Tibial artery (tissue), 4 donors: ENCODE measurements at regions of chr1 and their contacts with region 1.

Region 1: GRCh38 chr1:243345205-243345604 is 89.4 kb downstream of the SDCCAG8 start:
- DNase-seq: no peak
- H3K4me3 ChIP-seq: no peak overlapping the region
- H3K27ac ChIP-seq: no peak overlapping the region
- H3K4me1 ChIP-seq: no peaks in the 10 kb centered on the region
- H3K27me3 ChIP-seq: no peaks in the 10 kb centered on the region
- CTCF ChIP-seq: no peak

Region 2: GRCh38 chr1:243930822-243931671 is 585.8 kb after region 1 on chr1:
- intact Hi-C with region 1: no loop called
- DNase-seq: no peak
- H3K4me3 ChIP-seq: no peak overlapping the region
- H3K27ac ChIP-seq: peak overlapping the region in 1 of 2 donors; percentile 48
- H3K4me1 ChIP-seq: peaks cover 0 to 30% (median 18%) of the 10 kb centered on the region in 4 donors
- H3K27me3 ChIP-seq: no peaks in the 10 kb centered on the region
- CTCF ChIP-seq: no peak

Region 3: GRCh38 chr1:244272471-244273261 is 927.5 kb after region 1 on chr1:
- intact Hi-C with region 1: loop called (anchors 5 kb)
- DNase-seq: peak; percentile 60 to 84
- H3K4me3 ChIP-seq: no peak overlapping the region
- H3K27ac ChIP-seq: peak overlapping the region; percentile 64 to 78
- H3K4me1 ChIP-seq: peaks cover 0 to 23% (median 11%) of the 10 kb centered on the region in 4 donors
- H3K27me3 ChIP-seq: no peaks in the 10 kb centered on the region
- CTCF ChIP-seq: peak; percentile 89 to 97